ENCODE measurements at regions of chr11 and their contacts with region 1.

Region 1: GRCh38 chr11:95977534-95978174 is 53.7 kb upstream of the MTMR2 start:
- DNase-seq: peak; percentile 9
- H3K4me3 Mint-ChIP-seq: peak overlapping the region; percentile 15
- H3K27ac Mint-ChIP-seq: peak overlapping the region; percentile 70
- H3K4me1 Mint-ChIP-seq: peaks cover 11% of the 10 kb centered on the region
- H3K27me3 Mint-ChIP-seq: no peaks in the 10 kb centered on the region
- CTCF ChIP-seq: no peak

Region 2: DNA sequence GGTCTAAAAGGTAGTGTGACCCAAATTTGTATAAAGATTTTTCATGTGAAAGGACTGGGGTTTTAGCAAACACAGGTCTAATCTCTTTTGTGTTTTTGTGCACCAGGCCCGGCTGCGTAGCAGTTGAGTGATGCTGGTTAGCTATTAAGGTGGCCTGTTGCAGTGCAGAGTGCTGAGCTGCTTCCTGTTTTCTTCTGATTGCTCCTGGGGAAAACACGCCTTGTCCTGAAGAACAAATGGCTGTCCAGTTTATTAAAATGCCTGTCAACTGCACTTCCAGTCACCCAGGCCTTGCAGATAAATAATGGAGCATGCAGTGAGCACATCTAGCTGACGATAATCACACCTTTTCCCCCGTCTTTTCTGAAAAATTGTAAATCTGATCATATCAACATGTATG is 909.1 kb before region 1 on chr11:
- CTCF ChIA-PET with region 1: no interaction called
- intact Hi-C with region 1: no loop called
- DNase-seq: peak; percentile 69
- H3K4me3 Mint-ChIP-seq: peak overlapping the region; percentile 96
- H3K27ac Mint-ChIP-seq: peak overlapping the region; percentile 42
- H3K4me1 Mint-ChIP-seq: peaks cover 11% of the 10 kb centered on the region
- H3K27me3 Mint-ChIP-seq: no peaks in the 10 kb centered on the region
- CTCF ChIP-seq: no peak

Region 3: GRCh38 chr11:95923728-95924413 is 53.8 kb before region 1 on chr11 and contains the start of gene MTMR2:
- CTCF ChIA-PET with region 1: no interaction called
- intact Hi-C with region 1: loop called (anchors 2 kb)
- DNase-seq: peak; percentile 61
- H3K4me3 Mint-ChIP-seq: peak within 1 kb of the TSS; percentile 89
- H3K27ac Mint-ChIP-seq: peak within 1 kb of the TSS; percentile 86
- H3K4me1 Mint-ChIP-seq: peaks cover 13% of the 10 kb centered on the region
- H3K27me3 Mint-ChIP-seq: no peaks in the 10 kb centered on the region
- CTCF ChIP-seq: no peak
- total RNA-seq, gene MTMR2: 16.6 and 17.4 TPM in 2 replicates

Region 4: GRCh38 chr11:95991545-95991944 is 13.9 kb after region 1 on chr11:
- CTCF ChIA-PET with region 1: no interaction called
- intact Hi-C with region 1: loop called (anchors 2 kb)
- DNase-seq: no peak
- H3K4me3 Mint-ChIP-seq: peak overlapping the region; percentile 26
- H3K27ac Mint-ChIP-seq: peak overlapping the region; percentile 89
- H3K4me1 Mint-ChIP-seq: peaks cover 34% of the 10 kb centered on the region
- H3K27me3 Mint-ChIP-seq: no peaks in the 10 kb centered on the region
- CTCF ChIP-seq: no peak